Activated B cell treated with CpG ODN at 0.5 μM for 24 hours (primary cell): ENCODE measurements at regions of chr13 and their contacts with region 1.

Region 1: DNA sequence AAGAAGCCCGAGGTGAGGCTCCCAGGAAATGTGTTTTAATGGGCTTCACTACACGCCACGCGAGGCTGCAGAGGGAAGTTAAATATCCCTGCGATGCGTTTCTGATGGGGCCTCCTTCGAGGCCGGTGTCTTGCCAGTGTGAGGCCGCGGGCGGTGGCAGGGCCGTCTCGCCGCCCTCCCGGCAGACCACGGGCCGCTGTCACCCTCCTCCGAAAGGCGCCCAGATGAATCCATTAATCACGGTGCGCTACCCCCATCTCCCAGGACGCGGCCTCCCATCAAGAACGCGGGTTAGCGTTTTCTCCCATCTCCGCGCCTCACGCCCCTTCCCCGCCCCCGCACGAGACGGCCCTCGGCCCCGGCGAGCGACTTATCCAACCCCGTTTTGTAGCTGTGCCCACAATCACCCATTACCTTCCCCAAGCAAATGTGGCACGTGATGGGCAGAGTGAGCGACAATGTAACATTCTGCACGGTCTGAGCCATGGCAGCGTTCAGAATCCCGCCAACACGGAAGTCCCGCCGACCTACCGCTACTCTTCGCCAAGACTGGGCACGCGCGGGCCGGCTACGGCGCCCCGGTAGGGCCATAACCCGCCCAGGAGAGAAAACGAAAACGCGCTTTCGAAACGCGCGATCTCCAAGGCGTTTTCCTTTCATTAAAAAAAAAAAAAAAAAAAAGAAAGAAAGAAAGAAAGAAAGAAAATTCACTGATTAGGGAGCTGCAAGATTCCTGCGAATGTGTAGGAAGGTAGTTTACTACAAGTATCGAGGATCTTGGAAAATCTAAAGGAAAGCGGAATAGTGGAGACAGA is at the start of gene OBI1:
- DNase-seq: peak; percentile 88
- ATAC-seq: peak; percentile 98
- H3K4me3 Mint-ChIP-seq: peak within 1 kb of the TSS; percentile 100
- H3K27ac Mint-ChIP-seq: peak within 1 kb of the TSS; percentile 92
- H3K4me1 Mint-ChIP-seq: peaks cover 37% of the 10 kb centered on the region
- H3K27me3 Mint-ChIP-seq: no peaks in the 10 kb centered on the region
- CTCF ChIP-seq: no peak
- total RNA-seq, gene OBI1: 16.2 and 19.1 TPM in 2 replicates

Region 2: DNA sequence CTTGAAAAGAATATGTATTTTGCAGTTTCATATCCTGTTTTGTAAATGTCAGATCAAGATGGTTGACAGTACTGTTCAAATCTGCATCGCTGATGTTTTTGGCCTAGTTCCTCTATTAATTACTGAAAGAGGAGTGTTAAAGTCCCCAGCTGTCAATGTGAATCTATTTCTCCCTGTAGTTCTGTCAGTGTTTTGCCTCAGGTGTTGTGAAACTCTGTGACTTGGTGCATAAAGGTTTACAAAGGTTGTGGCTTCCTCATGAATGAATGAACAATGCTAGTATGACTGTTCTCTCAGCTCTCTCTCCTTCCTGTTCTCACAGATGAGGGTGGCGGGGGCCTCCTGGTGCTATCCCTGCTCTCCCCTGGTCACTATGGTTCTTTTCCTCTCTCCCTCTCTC is 1474.4 kb before region 1 on chr13:
- CTCF ChIA-PET with region 1: no interaction called
- POLR2A ChIA-PET with region 1: no interaction called
- intact Hi-C with region 1: loop called (anchors 5 kb)
- DNase-seq: peak; percentile 23
- ATAC-seq: peak; percentile 97
- H3K4me3 Mint-ChIP-seq: peak overlapping the region; percentile 61
- H3K27ac Mint-ChIP-seq: peak overlapping the region; percentile 95
- H3K4me1 Mint-ChIP-seq: peaks cover 28% of the 10 kb centered on the region
- H3K27me3 Mint-ChIP-seq: no peaks in the 10 kb centered on the region
- CTCF ChIP-seq: no peak

Region 3: DNA sequence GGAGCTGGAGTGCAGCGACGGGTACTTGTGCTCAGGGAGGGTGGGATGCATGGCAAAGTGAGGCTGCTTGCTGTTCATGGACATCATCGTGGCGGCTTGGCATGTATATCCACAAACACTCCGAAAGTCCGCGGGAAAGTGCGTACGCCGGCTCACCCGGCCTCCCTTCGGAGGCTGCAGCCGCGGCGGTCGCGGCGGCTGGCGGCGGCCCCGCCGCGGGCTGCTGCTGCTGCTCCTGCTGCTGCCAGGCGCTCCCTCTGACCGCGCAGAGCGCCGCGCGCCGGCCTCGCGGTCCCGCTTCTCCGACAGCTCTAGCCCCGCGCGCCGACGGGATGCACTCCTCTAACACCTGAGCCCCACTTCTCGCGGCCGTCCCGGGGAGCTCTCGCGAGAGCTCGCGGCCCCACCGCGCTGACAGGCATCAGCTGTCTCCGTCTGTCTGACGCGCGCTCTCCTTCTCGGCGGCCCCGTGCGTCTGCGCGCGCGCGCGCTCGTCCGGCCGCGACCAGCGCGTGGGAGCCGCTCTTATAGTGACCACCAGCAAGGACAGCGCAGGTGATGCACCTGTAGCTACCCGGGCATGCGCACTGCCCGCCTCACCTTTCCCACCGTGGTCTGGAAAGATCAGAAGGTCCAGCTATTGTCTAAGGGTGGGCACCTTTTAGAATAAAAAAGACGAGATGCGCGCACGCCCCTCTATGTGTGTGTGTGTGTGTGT is 55.4 kb before region 1 on chr13 and contains the start of gene POU4F1:
- CTCF ChIA-PET with region 1: no interaction called
- POLR2A ChIA-PET with region 1: no interaction called
- intact Hi-C with region 1: loop called (anchors 2 kb)
- DNase-seq: no peak
- ATAC-seq: peak; percentile 80
- H3K4me3 Mint-ChIP-seq: peak within 1 kb of the TSS; percentile 77
- H3K27ac Mint-ChIP-seq: peak within 1 kb of the TSS; percentile 71
- H3K4me1 Mint-ChIP-seq: peaks cover 54% of the 10 kb centered on the region
- H3K27me3 Mint-ChIP-seq: peaks cover 74% of the 10 kb centered on the region
- CTCF ChIP-seq: no peak
- total RNA-seq, gene POU4F1: 0.04 and 0.07 TPM in 2 replicates

Region 4: GRCh38 chr13:79393564-79394249 is 734.9 kb after region 1 on chr13:
- CTCF ChIA-PET with region 1: no interaction called
- POLR2A ChIA-PET with region 1: no interaction called
- intact Hi-C with region 1: loop called (anchors 5 kb)
- DNase-seq: peak; percentile 47
- ATAC-seq: peak; percentile 93
- H3K4me3 Mint-ChIP-seq: peak overlapping the region; percentile 65
- H3K27ac Mint-ChIP-seq: peak overlapping the region; percentile 85
- H3K4me1 Mint-ChIP-seq: peaks cover 65% of the 10 kb centered on the region
- H3K27me3 Mint-ChIP-seq: no peaks in the 10 kb centered on the region
- CTCF ChIP-seq: no peak

Region 5: GRCh38 chr13:79810669-79811068 is 1151.8 kb after region 1 on chr13:
- CTCF ChIA-PET with region 1: no interaction called
- POLR2A ChIA-PET with region 1: no interaction called
- intact Hi-C with region 1: loop called (anchors 5 kb)
- DNase-seq: no peak
- ATAC-seq: no peak
- H3K4me3 Mint-ChIP-seq: no peak overlapping the region
- H3K27ac Mint-ChIP-seq: no peak overlapping the region
- H3K4me1 Mint-ChIP-seq: peaks cover 26% of the 10 kb centered on the region
- H3K27me3 Mint-ChIP-seq: no peaks in the 10 kb centered on the region
- CTCF ChIP-seq: no peak